ENCODE measurements at regions of chr16 and their contacts with region 1.

Region 1: DNA sequence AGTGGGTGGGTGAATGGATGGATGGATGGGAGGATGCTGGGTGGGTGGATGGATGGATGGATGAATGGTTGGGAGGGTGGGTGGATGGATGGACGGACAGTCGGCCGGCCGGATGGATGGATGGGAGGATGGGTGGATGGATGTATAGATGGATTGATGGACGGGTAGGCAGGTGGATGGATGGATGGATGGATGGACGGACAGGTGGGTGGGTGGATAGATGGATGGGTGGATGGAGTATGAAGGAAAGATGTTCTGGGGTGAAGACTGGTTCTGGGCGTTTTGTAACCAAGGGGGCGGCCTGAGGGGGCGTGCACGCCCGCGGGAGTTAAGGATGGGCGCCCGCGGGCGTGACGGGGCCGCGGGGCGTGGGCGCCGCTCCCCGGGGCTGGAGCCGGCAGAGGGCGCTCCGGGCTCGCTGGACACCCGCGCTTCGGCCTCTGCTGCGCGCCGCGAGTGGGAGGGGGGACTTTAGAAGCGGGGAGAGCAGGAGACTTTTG is at the start of gene NECAB2:
- DNase-seq: peak; percentile 84
- ATAC-seq: peak; percentile 65
- total RNA-seq, gene NECAB2: 1.8 TPM

Region 2: GRCh38 chr16:83933885-83934683 is 33.8 kb before region 1 on chr16:
- intact Hi-C with region 1: no loop called
- DNase-seq: no peak
- ATAC-seq: no peak

Region 3: GRCh38 chr16:84062734-84063640 is 95.1 kb after region 1 on chr16:
- intact Hi-C with region 1: loop called (anchors 1 kb)
- DNase-seq: peak; percentile 91
- ATAC-seq: peak; percentile 82

Region 4: DNA sequence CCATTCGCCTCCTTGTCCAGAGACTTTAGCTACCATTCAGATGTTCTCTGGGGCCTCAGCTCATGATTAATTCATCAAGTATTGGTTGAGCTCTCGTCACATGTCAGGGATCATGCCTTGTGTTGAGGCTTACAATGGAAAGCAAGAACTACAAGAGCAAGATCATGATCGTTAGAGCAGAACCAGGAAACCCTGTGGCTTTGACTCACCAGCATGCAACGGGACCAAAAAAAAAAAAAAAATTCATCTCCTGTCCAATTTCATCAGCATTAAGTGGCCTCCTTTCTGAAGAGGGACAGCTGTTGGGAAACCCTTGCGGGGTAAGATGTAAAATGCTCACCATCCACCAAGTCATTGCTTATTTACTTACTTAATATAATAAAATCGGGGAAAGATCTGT is 719.9 kb after region 1 on chr16:
- intact Hi-C with region 1: no loop called
- DNase-seq: no peak
- ATAC-seq: no peak